Activated CD4-positive, alpha-beta T cell treated with anti-CD3 and anti-CD28 coated beads, Interleukin-2, amount 10 ng/mL, durations not matched to agents 24 days and 14 days (primary cell): ENCODE measurements at regions of chr9 and their contacts with region 1.

Region 1: DNA sequence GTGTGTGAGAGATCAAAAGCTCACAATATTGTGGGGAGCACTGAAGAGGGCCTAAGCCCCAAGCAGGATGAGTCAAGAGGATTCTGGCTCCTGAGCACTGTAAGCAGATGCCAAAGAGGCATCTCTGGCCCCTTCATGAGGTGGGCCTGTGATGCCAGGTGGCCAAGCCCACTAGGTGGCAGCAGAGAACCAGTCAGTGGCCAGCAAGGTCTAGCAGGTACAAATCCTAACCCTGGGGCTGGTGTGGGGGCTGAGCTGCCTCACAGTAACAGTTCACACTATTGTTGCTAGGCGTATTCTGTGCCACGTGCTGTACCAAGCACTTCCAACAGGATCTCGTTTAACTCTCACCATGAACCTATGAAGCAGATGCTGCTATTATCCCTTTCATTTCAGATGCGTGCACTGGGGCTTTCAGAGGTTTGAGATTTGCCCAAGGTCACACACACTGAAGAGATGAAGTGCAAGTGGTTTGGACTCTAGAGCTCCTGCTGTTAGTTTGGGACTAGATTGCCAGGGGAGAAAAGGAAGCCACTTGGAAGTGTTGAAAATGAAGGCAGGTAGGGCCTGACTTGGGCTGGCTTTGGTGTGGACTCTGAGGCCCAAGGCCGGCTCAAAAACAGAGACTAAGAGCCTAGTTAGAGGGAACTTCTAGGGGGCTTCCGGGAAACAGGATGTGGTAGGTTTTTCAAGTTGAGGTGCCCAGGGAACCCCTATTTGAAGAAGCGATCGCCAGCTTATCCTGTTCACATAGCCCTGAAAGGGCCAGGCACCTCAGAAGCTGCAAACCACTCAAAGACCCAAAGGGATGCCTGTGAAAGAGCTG is 4.4 kb upstream of the MLANA start:
- DNase-seq: peak; percentile 94
- H3K4me3 Mint-ChIP-seq: no peak overlapping the region
- H3K27ac Mint-ChIP-seq: peak overlapping the region; percentile 26
- H3K4me1 Mint-ChIP-seq: peaks cover 9% of the 10 kb centered on the region
- H3K27me3 Mint-ChIP-seq: no peaks in the 10 kb centered on the region

Region 2: GRCh38 chr9:5863092-5863746 is 23.1 kb before region 1 on chr9:
- intact Hi-C with region 1: no loop called
- DNase-seq: no peak
- H3K4me3 Mint-ChIP-seq: no peak overlapping the region
- H3K27ac Mint-ChIP-seq: no peak overlapping the region
- H3K4me1 Mint-ChIP-seq: no peaks in the 10 kb centered on the region
- H3K27me3 Mint-ChIP-seq: no peaks in the 10 kb centered on the region

Region 3: DNA sequence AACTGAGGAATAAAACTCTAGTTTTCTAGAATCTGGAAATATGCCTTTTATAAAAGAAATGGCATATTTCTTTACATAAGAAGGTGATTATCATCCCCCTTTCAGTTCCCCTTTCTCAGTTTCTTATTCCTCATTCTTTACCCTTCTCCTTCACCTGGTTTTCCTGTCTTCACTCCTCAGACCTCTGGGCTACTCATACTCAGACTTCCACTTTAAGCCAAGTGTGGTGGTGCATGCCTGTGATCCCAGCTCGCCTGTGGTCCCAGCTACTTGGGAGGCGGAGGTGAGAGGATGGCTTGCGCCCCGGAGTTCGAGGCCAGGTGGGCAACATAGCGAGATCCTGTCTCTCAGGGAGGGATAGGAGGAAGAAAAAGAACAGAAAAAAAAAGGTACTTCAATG is 71.9 kb after region 1 on chr9:
- intact Hi-C with region 1: loop called (anchors 5 kb)
- DNase-seq: no peak
- H3K4me3 Mint-ChIP-seq: no peak overlapping the region
- H3K27ac Mint-ChIP-seq: no peak overlapping the region
- H3K4me1 Mint-ChIP-seq: no peaks in the 10 kb centered on the region
- H3K27me3 Mint-ChIP-seq: no peaks in the 10 kb centered on the region

Region 4: GRCh38 chr9:6049798-6050197 is 163.5 kb after region 1 on chr9:
- intact Hi-C with region 1: loop called (anchors 1 kb)
- DNase-seq: peak; percentile 80
- H3K4me3 Mint-ChIP-seq: no peak overlapping the region
- H3K27ac Mint-ChIP-seq: peak overlapping the region; percentile 31
- H3K4me1 Mint-ChIP-seq: peaks cover 15% of the 10 kb centered on the region
- H3K27me3 Mint-ChIP-seq: peaks cover 13% of the 10 kb centered on the region

Region 5: DNA sequence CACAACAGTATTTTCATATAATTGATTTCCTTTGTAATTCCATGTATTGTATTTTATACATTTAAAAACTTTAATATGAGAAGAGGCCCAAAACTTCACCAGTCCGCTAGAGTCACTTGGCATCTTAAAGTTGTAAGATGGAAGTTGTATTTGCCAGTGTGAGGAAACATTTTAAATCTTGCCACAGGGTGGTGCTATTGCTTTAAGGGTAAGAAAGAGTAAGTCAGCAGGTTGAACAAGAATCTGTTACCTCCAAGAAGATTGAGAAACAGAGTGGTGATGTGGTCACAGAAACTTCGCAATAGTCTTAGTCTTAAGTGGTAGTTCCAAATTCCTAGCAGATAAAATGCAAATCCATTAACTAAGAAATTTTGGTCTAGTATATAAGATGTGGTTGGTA is 168.9 kb after region 1 on chr9:
- intact Hi-C with region 1: loop called (anchors 1 kb)
- DNase-seq: peak; percentile 89
- H3K4me3 Mint-ChIP-seq: no peak overlapping the region
- H3K27ac Mint-ChIP-seq: no peak overlapping the region
- H3K4me1 Mint-ChIP-seq: peaks cover 8% of the 10 kb centered on the region
- H3K27me3 Mint-ChIP-seq: peaks cover 29% of the 10 kb centered on the region

Region 6: GRCh38 chr9:6305954-6306563 is 419.7 kb after region 1 on chr9:
- intact Hi-C with region 1: loop called (anchors 2 kb)
- DNase-seq: no peak
- H3K4me3 Mint-ChIP-seq: no peak overlapping the region
- H3K27ac Mint-ChIP-seq: no peak overlapping the region
- H3K4me1 Mint-ChIP-seq: no peaks in the 10 kb centered on the region
- H3K27me3 Mint-ChIP-seq: peaks cover 24% of the 10 kb centered on the region

Region 7: DNA sequence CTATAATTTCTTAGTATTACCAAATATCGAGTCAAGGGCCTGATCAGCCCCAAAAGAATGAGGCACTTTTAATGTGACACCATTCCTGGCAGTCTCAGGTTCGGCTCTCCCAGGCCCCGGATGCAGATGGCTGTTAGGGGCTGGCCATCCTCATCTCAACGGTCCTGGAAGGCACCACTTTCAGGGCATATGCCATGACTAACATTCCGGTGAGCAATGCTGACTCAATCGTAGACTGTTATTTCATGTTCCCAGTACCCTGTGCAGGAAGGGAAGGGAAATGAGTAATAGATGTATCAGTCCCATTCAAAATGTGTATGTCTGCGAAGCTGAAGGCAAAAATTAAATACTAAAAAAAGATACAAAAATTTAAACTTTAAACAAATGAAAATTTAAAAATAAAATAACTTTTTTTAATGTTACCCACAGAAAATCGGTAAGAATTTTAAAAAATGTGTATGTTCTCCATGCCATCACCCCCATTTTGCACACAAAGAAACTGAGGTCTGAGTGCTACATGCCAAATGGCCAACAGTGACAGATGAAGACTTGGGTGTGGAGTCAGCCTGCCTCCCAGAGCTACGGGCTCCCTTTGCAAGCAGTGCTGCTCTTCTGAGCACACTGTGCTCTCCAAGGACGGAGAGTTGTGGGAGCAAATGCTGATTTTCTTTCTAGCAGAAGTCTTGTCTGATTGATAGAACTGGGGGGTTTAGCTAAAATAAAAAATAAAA is 680.2 kb after region 1 on chr9:
- intact Hi-C with region 1: loop called (anchors 10 kb)
- DNase-seq: peak; percentile 81
- H3K4me3 Mint-ChIP-seq: peak overlapping the region; percentile 73
- H3K27ac Mint-ChIP-seq: peak overlapping the region; percentile 83
- H3K4me1 Mint-ChIP-seq: peaks cover 15% of the 10 kb centered on the region
- H3K27me3 Mint-ChIP-seq: peaks cover 6% of the 10 kb centered on the region